GM18951 (cell line): ENCODE measurements at regions of chrX and their contacts with region 1.

Region 1: GRCh38 chrX:154596290-154596929 is 11.5 kb downstream of the CTAG1A start:
- POLR2A ChIP-seq: no peak

Region 2: GRCh38 chrX:154411322-154411980 is 185.0 kb before region 1 on chrX and contains the start of gene TAFAZZIN:
- in situ Hi-C with region 1: no loop called
- POLR2A ChIP-seq: peak; percentile 77

Region 3: DNA sequence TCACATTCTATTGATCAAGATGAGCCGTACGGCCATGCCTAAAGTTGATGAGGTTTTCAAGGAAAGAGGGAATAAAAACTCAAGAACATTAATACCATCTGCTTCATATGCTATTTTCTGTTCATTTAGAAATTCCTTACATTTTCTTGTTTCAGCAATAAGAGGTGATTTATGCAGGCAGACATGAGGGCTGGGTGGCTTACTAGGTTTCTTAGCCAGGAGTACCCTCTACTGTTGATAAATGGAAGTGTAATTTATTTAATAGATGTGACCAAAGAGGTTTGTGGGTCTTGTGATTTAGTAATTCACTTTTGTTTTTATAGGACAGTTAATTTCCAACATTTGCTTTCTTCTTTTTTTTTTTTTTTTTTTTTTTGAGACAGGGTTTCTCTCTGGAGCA is 244.4 kb after region 1 on chrX:
- in situ Hi-C with region 1: loop called (anchors 25 kb)
- POLR2A ChIP-seq: no peak